ENCODE measurements at regions of chr4 and their contacts with region 1.

Region 1: DNA sequence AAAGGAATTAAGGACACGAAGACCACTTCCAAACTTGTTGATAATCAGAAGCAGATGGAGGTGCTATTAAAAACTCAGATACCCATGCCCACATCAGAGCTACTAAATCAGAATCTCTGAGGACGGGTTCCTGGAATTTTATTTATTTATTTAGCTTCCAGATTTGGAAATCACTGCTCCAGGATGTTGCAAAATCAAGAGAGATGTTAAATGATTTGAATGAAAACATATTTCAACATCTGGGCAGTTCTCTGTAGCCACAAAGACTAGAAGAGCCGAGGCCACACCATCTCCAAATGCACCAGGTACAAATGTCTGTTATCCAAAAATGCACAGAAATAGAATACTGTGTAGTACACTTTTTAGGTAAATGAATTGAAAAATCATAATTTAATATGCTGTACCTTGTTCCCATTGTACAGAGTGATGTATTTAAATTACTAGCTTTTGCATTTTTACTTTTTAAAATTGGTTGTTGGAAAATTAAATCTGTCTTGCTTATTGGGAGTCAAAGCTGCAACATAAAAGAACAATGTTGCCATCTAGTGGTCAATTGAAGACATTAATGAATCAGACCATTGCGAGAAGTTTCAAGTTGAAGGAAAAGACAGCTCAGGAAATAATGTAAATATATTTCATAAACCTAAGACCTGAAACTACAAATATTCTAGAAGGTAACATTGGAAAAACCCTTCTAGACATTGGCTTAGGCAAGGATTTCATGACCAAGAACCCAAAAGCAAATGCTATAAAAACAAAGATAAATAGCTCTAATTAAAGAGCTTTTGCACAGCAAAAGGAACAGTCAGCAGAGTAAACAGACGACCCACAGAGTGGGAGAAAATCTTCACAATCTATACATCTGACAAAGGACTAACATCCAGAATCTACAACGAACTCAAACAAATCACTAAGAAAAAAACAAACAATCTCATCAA is 151.3 kb upstream of the TTC29 start:
- DNase-seq: peak; percentile 70
- H3K4me3 ChIP-seq: no peak overlapping the region
- H3K27ac ChIP-seq: no peak overlapping the region
- H3K4me1 ChIP-seq: peaks cover 14% of the 10 kb centered on the region
- H3K27me3 ChIP-seq: no peaks in the 10 kb centered on the region

Region 2: DNA sequence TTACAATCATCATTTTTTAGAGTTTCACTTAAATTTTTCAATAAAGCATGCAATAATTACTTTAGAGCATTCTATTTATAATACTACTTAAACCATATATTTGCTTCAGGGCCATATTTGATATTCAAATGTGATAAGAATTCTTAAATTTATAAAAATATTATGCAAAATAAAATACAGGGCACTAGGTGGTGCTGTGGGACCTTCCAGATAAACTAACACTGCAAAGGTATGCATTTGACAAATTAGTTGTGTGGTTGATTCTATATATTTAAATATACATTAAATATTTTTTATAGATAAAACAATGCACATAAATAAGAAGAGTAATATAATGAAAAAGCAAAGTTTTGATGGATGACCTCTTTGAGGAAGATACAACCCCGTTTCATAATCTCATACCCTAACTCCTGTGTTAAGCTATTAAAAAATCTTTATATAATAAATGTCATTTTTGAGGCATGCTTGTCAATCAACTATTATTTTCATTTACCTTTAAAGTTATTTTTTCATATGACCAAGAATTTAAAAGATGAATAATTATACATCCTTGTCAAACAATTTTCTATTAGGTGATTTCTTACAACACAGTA is 754.2 kb before region 1 on chr4:
- in situ Hi-C with region 1: loop called (anchors 25 kb)
- DNase-seq: peak; percentile 56
- H3K4me3 ChIP-seq: no peak overlapping the region
- H3K27ac ChIP-seq: no peak overlapping the region
- H3K4me1 ChIP-seq: no peaks in the 10 kb centered on the region
- H3K27me3 ChIP-seq: no peaks in the 10 kb centered on the region

Region 3: GRCh38 chr4:147029296-147029695 is 67.6 kb before region 1 on chr4:
- in situ Hi-C with region 1: loop called (anchors 10 kb)
- DNase-seq: no peak
- H3K4me3 ChIP-seq: no peak overlapping the region
- H3K27ac ChIP-seq: no peak overlapping the region
- H3K4me1 ChIP-seq: peaks cover 2% of the 10 kb centered on the region; the same call in 1 of the 2 replicates
- H3K27me3 ChIP-seq: no peaks in the 10 kb centered on the region

Region 4: DNA sequence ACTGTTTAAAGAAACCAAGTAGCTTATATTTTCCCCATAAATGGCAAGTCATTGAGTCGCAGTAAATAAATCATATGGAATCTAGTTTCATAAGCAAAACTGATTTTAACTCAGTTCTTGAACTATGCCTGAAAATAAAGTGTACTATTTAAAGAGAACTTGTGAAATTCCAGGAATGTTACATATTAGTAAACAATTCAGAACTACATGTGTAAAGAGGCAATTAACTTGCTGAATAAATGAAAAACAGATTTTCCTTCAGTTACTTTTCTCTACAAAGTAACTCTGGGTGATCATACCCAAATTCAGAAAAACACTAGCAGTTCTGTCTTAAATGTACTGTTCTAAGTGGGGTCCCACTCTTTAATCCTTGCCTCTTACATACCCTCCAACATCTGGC is 147.8 kb after region 1 on chr4:
- in situ Hi-C with region 1: no loop called
- DNase-seq: no peak
- H3K4me3 ChIP-seq: no peak overlapping the region
- H3K27ac ChIP-seq: no peak overlapping the region
- H3K4me1 ChIP-seq: no peaks in the 10 kb centered on the region
- H3K27me3 ChIP-seq: peaks cover 6% of the 10 kb centered on the region; the same call in 1 of the 2 replicates

Measured in GM23248 (cell line).